MCF 10A (cell line): ENCODE measurements at regions of chr3 and their contacts with region 1.

Region 1: GRCh38 chr3:194472290-194472920 is 14.4 kb downstream of the ATP13A3 start:
- DNase-seq: peak; percentile 71
- H3K4me3 Mint-ChIP-seq: no peak overlapping the region
- H3K27ac Mint-ChIP-seq: no peak overlapping the region
- H3K4me1 Mint-ChIP-seq: peaks cover 17% of the 10 kb centered on the region
- H3K27me3 Mint-ChIP-seq: no peaks in the 10 kb centered on the region
- CTCF ChIP-seq: peak; percentile 90

Region 2: DNA sequence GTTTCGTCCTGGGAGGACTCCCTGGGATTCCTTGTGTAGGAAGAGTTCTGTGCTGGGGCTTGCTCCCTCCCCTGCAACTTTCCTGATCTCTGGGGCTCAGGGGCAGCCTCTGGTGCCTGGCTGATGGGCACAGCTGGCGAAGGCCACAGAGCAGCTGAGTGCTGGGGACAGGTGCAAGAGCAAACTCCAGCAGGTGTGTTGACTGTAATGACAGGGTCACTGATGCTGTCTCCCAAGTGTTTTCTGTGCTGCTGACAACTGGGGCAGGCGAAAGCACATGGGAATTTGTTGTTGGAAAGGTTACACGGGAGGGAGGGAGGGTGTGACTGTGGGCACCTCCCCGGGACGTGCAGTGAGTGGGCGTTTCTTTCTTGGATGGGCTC is 142.8 kb before region 1 on chr3:
- CTCF ChIA-PET with region 1: no interaction called
- POLR2A ChIA-PET with region 1: no interaction called
- intact Hi-C with region 1: no loop called
- DNase-seq: no peak
- H3K4me3 Mint-ChIP-seq: no peak overlapping the region
- H3K27ac Mint-ChIP-seq: no peak overlapping the region
- H3K4me1 Mint-ChIP-seq: peaks cover 28% of the 10 kb centered on the region
- H3K27me3 Mint-ChIP-seq: no peaks in the 10 kb centered on the region
- CTCF ChIP-seq: no peak

Region 3: DNA sequence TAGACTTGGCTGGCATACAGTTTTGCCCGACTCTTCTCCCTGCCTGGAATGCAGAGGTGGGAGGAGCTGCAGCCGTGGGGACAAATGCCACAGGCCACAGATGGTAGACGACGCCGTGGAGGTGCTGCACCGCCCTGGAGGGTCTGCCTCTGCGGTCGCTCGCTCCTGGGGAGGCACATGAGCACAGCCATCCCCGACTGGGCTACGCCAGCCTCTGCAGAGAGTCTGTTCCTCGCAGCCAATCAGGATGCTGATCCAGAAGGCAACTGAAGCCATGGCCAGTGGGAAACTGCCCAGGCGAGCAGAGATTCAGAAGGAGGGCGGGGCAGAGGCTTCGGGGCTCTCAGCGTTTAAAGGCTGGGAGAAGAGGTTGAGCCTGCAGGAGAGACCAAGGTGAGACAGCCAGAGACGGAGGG is 90.9 kb before region 1 on chr3:
- CTCF ChIA-PET with region 1: no interaction called
- POLR2A ChIA-PET with region 1: no interaction called
- intact Hi-C with region 1: no loop called
- DNase-seq: no peak
- H3K4me3 Mint-ChIP-seq: no peak overlapping the region
- H3K27ac Mint-ChIP-seq: no peak overlapping the region
- H3K4me1 Mint-ChIP-seq: no peaks in the 10 kb centered on the region
- H3K27me3 Mint-ChIP-seq: peaks cover 45% of the 10 kb centered on the region
- CTCF ChIP-seq: no peak

Region 4: DNA sequence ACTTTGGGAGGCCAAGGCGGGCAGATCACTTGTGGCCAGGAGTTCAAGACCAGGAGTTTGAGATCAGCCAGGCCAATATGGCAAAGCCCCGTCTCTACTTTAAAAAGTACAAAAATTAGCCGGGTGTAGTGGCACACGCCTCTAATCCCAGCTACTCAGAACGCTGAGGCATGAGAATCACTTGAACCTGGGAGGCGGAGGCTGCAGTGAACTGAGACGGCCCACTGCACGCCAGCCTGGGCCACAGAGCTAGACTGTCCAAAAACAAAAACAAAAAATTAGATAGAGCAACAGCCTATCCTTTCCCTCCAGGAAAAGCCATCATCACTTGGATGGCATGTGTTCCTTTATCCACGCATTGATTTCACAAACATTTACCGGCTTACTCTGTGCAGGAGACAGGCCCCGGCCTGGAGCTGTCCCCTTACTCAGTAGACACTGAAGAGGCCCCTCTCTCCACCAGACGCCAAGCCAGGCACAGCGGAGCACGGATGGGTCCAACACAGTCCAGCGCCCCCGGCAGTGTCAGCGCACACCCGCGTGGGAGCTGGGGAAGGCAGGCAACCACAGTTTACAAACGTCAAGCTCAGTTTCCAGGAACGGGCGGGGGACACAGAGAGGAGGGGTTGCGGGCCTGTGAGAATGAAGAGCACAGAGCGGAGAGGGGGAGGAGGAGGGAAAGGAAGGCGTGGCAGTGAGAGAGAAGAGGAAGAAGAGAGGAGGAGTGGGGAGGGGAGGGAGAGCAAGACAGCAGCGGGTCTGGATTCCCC is 76.4 kb before region 1 on chr3:
- CTCF ChIA-PET with region 1: no interaction called
- POLR2A ChIA-PET with region 1: no interaction called
- intact Hi-C with region 1: no loop called
- DNase-seq: no peak
- H3K4me3 Mint-ChIP-seq: no peak overlapping the region
- H3K27ac Mint-ChIP-seq: no peak overlapping the region
- H3K4me1 Mint-ChIP-seq: no peaks in the 10 kb centered on the region
- H3K27me3 Mint-ChIP-seq: peaks cover 7% of the 10 kb centered on the region
- CTCF ChIP-seq: no peak

Region 5: DNA sequence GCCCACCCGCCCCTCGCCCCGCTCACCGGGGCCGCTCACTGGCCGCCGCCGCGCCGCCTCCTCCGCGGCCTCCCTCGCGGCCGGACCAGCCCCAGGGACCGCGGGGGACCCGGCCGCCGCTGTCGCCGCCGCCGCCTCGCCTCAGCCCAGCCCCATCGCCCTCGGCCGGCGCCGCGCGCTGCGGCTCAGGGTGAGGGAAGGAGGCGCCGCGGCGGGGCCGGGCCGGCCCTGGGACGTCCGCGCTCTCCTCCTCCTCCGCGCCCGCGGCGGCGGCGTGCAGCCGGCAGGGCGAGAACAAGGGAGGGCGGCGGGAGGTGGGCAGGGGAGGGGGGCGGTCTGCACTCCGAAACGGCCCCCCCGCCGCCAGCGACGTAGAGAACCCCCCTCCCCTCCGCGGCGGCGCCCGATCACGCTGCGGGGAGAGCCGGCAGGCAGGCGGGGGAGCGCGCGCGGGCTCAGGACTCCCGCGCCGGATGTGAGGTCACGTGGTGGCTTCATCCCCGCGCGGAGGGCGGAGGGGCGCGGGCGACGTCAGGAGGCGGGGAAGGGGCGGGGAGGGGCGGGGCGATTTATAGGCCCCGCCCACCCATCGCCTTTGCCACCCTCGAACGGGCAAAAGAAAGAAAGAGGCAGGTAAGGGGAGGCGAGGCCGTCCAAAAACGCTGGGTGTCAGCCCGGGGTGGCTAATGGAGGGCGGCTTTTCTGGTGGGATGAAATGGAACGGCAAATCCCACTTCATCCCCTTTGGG is 14.3 kb after region 1 on chr3 and contains the start of gene ATP13A3:
- CTCF ChIA-PET with region 1: interaction called, 32 read pairs
- POLR2A ChIA-PET with region 1: interaction called, 9 read pairs
- intact Hi-C with region 1: no loop called
- DNase-seq: peak; percentile 90
- H3K4me3 Mint-ChIP-seq: peak within 1 kb of the TSS; percentile 86
- H3K27ac Mint-ChIP-seq: peak within 1 kb of the TSS; percentile 92
- H3K4me1 Mint-ChIP-seq: peaks cover 30% of the 10 kb centered on the region
- H3K27me3 Mint-ChIP-seq: no peaks in the 10 kb centered on the region
- CTCF ChIP-seq: no peak
- total RNA-seq, gene ATP13A3: 119 and 125 TPM in 2 replicates

Region 6: DNA sequence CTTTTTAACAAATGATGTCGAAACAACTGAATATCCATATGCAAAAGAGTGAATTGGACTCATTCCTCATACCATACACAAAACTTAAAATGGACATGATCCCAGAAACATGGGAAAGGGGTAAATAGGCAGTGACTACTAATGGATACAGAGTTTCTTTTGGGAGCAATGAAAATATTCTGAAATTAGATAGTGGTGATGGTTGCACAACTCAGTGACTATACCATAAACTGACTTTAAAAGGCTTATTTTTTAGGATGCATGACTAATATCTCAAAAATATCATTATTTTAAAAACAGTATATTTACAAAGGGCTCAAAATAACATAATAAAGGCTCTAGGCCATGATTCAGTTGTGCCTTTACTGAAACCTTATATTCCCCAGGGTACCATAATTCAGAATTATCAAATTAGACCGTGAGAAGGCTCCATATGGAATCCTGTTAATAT is 30.7 kb after region 1 on chr3:
- CTCF ChIA-PET with region 1: no interaction called
- POLR2A ChIA-PET with region 1: no interaction called
- intact Hi-C with region 1: no loop called
- DNase-seq: no peak
- H3K4me3 Mint-ChIP-seq: no peak overlapping the region
- H3K27ac Mint-ChIP-seq: no peak overlapping the region
- H3K4me1 Mint-ChIP-seq: no peaks in the 10 kb centered on the region
- H3K27me3 Mint-ChIP-seq: no peaks in the 10 kb centered on the region
- CTCF ChIP-seq: no peak

Region 7: GRCh38 chr3:194573691-194574437 is 101.5 kb after region 1 on chr3:
- CTCF ChIA-PET with region 1: interaction called, 10 read pairs
- POLR2A ChIA-PET with region 1: interaction called, 4 read pairs
- intact Hi-C with region 1: loop called (anchors 1 kb)
- DNase-seq: peak; percentile 69
- H3K4me3 Mint-ChIP-seq: no peak overlapping the region
- H3K27ac Mint-ChIP-seq: no peak overlapping the region
- H3K4me1 Mint-ChIP-seq: peaks cover 38% of the 10 kb centered on the region
- H3K27me3 Mint-ChIP-seq: no peaks in the 10 kb centered on the region
- CTCF ChIP-seq: peak; percentile 41

Region 8: DNA sequence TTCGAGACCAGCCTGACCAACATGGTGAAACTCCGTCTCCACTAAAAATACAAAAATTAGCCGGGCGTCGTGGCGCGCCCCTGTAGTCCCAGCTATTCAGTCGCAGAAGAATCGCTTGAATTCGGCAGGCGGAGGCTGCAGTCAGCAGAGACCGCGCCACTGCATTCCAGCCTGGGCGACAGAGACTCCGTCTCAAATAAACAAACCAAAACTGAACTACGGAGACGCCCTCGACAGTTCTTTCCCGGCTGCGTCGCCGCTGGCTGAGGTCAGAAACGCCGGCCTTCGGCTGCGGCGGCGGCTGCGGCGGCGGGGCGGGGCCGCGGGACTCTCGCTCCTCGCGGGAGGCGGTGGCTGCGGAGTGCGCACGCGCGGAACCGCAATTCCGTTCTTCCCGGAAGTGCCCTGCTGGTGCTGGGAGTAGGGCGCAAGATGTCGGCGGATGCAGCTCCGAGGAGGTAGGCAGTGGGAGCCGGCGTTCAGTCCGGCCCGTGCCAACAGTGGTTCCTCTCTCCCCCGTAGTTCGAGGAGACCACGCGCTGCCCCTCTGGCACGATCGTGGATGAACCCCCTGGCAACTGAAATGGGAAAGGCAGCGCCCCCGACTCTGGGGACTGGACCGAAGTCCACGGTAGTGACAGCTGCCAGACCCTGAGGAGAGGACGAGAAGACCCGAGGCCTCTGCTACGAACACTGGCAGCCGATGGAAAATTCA is 111.4 kb after region 1 on chr3:
- CTCF ChIA-PET with region 1: interaction called, 18 read pairs
- POLR2A ChIA-PET with region 1: interaction called, 15 read pairs
- intact Hi-C with region 1: no loop called
- DNase-seq: peak; percentile 89
- H3K4me3 Mint-ChIP-seq: peak overlapping the region; percentile 96
- H3K27ac Mint-ChIP-seq: peak overlapping the region; percentile 96
- H3K4me1 Mint-ChIP-seq: peaks cover 20% of the 10 kb centered on the region
- H3K27me3 Mint-ChIP-seq: no peaks in the 10 kb centered on the region
- CTCF ChIP-seq: no peak

Region 9: DNA sequence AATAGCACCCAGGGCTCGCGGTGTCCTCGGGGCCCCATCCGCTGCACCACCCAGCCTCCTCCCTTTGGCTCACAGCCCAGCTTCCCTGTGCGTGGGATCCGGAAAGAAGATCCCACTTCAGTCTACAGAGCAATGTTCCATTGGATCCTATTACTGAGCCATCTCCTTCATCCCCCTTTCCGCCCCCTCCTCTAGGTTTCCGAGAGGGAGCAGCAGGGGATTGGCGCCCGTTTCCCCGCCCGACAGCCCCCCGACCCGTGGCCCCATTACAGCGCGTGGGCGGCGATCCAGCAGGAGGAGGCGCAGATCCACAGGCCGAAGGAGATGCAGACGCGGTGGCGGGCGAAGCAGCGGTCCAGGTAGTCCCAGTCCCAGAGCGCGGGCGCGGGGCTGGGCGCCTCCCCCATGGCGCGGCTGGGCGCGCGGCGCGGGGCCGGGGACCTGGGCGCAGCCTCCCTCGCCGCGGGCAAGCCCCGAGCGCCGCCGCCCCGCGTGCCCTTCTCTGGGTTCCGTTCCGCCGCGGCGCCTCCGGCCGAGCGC is 160.5 kb after region 1 on chr3:
- CTCF ChIA-PET with region 1: interaction called, 13 read pairs
- POLR2A ChIA-PET with region 1: interaction called, 5 read pairs
- intact Hi-C with region 1: loop called (anchors 1 kb)
- DNase-seq: peak; percentile 54
- H3K4me3 Mint-ChIP-seq: peak overlapping the region; percentile 92
- H3K27ac Mint-ChIP-seq: no peak overlapping the region
- H3K4me1 Mint-ChIP-seq: peaks cover 6% of the 10 kb centered on the region
- H3K27me3 Mint-ChIP-seq: no peaks in the 10 kb centered on the region
- CTCF ChIP-seq: no peak